ENCODE measurements at regions of chr3 and their contacts with region 1.

Region 1: DNA sequence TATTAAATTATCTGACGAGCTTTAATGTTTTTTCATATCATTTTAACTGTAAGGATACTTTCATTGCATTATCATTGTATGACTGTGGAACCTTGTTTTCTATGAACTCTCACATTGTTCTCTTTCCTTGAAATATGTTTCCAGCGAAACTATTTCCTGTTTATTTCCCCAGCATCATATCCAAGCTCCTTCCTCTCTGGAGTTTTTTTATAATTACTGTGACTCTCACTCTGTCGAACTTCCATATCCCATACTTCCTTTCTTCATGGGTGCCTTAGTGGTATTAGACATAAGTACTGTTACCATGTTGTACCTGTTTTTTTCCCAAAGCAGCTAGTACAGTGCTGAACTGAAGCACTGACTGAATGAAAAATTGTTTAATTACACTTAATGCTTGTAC is 373.6 kb upstream of the CNTN3 start:
- ATAC-seq: no peak
- H3K4me3 ChIP-seq: no peak overlapping the region
- H3K27ac ChIP-seq: no peak overlapping the region
- H3K4me1 ChIP-seq: no peaks in the 10 kb centered on the region

Region 2: DNA sequence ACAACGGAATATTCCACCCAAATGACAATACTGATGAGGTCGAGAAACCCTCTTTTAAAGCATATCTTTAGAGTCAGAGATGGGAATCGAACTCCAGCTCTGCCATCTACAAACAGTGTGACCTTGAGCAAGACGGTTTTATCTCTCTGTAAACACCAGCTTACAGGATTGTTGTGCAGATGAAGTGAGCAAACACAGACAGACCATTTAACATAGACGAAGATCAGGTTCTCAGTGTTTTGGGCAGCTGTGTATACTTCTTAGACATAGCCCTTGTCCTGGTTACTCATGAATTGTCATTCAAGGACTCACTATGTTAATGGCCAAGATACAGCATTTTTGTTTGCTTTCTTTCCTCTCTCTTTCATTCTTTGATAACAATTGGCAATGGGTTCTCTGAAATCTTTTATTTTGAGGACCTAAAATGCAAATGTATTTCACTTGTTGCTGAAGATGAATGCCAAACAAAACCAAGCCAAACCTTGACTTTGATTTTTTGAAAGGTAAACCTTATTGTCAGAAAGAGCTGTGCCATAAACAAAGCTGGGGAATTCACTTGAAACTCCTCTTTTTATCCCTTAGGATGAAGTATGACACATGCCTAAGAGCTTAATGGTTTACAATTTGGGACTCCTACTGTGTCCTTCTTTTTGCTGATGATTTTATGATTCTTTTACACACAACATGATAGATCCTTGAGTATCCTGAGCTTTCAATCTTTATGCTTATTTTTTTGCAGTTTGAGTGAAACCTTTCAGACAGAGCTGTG is 1113.3 kb before region 1 on chr3:
- in situ Hi-C with region 1: loop called in 1 of 9 experiments (anchors 25 kb)
- ATAC-seq: peak in 5 of 8 experiments; percentile 62 to 98 (median 80)
- H3K4me3 ChIP-seq: no peak overlapping the region
- H3K27ac ChIP-seq: no peak overlapping the region
- H3K4me1 ChIP-seq: peaks cover 0 to 2% of the 10 kb centered on the region in 2 donors

Region 3: DNA sequence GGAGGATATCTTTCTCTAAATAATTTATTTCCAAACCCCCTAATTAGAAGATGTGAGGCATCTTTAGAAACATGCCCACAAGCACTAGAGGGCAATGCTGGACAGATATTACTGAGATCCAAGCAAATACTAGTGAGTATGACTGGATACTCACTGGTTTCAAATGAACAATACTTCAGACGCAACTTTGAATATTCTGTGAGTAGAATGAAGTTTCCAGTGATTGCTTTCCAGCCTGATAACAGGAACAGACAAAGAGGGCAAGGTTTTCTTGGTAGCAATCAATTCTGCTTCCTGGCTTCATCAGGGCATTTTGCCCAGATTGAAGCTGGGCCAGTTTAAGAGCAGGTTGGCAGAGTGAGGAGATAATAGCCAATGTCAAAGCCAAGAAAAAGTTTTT is 920.8 kb before region 1 on chr3:
- in situ Hi-C with region 1: loop called in 1 of 9 experiments (anchors 25 kb)
- ATAC-seq: peak in 5 of 8 experiments; percentile 43 to 95 (median 80)
- H3K4me3 ChIP-seq: no peak overlapping the region
- H3K27ac ChIP-seq: no peak overlapping the region
- H3K4me1 ChIP-seq: peaks cover 0 to 6% of the 10 kb centered on the region in 2 donors

Region 4: GRCh38 chr3:74651292-74651691 is 336.8 kb before region 1 on chr3:
- in situ Hi-C with region 1: loop called in 1 of 9 experiments (anchors 25 kb)
- ATAC-seq: peak in 1 of 8 experiments; percentile 47
- H3K4me3 ChIP-seq: no peak overlapping the region
- H3K27ac ChIP-seq: no peak overlapping the region
- H3K4me1 ChIP-seq: no peaks in the 10 kb centered on the region

Region 5: GRCh38 chr3:74832925-74833324 is 155.2 kb before region 1 on chr3:
- in situ Hi-C with region 1: no loop called
- ATAC-seq: no peak
- H3K4me3 ChIP-seq: no peak overlapping the region
- H3K27ac ChIP-seq: no peak overlapping the region
- H3K4me1 ChIP-seq: no peaks in the 10 kb centered on the region

Measured in motor neuron (in vitro differentiated cells).